Prostate gland (tissue), 2 donors: ENCODE measurements at regions of chr22 and their contacts with region 1.

Region 1: DNA sequence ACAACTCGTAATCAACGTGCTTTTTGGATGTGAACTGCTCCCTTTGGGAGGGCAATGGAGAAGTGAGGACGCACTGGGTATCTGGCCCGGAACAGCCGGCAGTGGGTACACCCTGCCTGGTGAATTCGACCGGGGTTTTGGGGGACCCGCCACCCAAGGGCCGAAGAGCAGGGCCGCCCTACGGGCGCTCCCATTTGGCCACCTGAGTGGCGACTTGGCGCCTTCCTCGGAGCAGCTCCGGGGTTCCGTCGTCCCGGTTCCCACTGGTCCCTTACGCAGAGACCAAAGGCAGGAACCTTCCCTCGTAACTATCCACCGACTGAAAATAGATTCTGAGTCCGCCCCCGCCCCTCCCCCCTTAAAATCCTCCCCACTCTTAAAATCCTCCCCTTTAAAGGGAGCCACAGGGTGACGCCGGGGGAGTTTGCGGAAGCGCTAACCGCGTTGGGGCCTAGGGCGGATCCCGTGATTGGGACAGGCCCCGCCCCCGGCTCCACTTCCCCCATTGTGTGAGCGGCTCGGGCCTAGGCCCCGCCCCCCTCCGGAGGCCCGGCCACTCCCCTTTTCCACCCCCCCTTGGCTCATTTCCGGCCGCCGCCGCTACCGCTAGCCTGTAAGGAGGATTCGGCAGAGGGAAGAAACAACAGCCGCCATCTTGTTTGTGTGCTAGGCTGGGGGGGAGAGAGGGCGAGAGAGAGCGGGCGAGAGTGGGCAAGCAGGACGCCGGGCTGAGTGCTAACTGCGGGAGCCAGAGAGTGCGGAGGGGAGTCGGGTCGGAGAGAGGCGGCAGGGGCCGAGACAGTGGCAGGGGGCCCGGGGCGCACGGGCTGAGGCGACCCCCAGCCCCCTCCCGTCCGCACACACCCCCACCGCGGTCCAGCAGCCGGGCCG is 1.0 kb upstream of the EP300 start:
- DNase-seq: peak; percentile 99
- H3K4me3 ChIP-seq: peak overlapping the region; percentile 74 to 99
- H3K27ac ChIP-seq: peak overlapping the region; percentile 100
- H3K4me1 ChIP-seq: peaks cover 5% of the 10 kb centered on the region
- H3K27me3 ChIP-seq: no peaks in the 10 kb centered on the region
- CTCF ChIP-seq: peak in 1 of 4 experiments; percentile 4
- POLR2A ChIP-seq: peak; percentile 93

Region 2: GRCh38 chr22:40950962-40951794 is 140.2 kb before region 1 on chr22 and contains the start of gene RBX1:
- intact Hi-C with region 1: loop called (anchors 1 kb)
- DNase-seq: peak; percentile 98
- H3K4me3 ChIP-seq: peak within 1 kb of the TSS; percentile 73 to 80
- H3K27ac ChIP-seq: peak within 1 kb of the TSS; percentile 91 to 95
- H3K4me1 ChIP-seq: peaks cover 5% of the 10 kb centered on the region
- H3K27me3 ChIP-seq: no peaks in the 10 kb centered on the region
- CTCF ChIP-seq: no peak
- POLR2A ChIP-seq: peak; percentile 91
- total RNA-seq, gene RBX1: 34.9 to 42.8 TPM

Region 3: DNA sequence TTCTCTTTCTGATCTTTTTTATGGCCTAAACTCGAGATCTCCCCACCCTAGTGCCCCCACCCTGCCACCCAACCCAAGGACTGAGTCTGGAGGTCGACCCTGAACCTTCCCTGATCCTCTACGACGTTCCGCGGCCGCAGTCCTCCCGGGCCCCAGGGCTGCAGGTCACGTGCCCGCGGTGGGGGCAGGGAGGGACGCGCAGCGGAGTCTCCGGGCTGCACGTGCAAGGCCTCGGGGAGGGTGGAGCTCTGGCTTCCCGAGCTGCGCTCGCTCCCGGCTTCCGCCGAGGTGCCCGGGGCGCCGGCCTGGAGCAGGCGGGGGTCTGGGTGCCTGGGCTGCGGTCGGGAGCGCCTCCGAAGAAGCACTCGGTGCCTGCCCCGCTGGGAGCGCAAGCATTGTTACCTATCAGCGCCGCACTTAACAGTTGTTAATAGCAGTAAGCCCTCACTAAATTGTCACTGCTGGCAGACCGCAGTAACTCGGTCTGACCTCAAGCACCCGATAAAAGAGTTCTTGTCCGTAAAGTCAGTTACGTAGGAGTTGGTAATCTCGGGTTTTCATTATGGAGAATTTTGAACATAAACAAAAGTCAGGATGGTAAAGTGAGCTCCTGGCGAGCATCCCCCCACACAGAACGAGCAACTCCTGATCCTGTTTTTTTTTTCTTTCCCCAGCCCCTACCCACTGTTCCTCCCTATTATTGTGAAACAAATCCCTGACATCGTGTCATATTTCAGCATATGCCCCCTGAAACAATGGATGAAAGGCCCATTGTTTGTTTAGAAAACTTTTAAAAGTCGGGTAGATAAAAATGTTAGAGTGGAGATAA is 68.7 kb before region 1 on chr22:
- intact Hi-C with region 1: loop called (anchors 5 kb)
- DNase-seq: peak; percentile 92
- H3K4me3 ChIP-seq: peak overlapping the region; percentile 74 to 77
- H3K27ac ChIP-seq: peak overlapping the region; percentile 98 to 99
- H3K4me1 ChIP-seq: no peaks in the 10 kb centered on the region
- H3K27me3 ChIP-seq: no peaks in the 10 kb centered on the region
- CTCF ChIP-seq: no peak
- POLR2A ChIP-seq: peak; percentile 52

Region 4: GRCh38 chr22:41038732-41039445 is 52.5 kb before region 1 on chr22:
- intact Hi-C with region 1: no loop called
- DNase-seq: no peak
- H3K4me3 ChIP-seq: no peak overlapping the region
- H3K27ac ChIP-seq: no peak overlapping the region
- H3K4me1 ChIP-seq: no peaks in the 10 kb centered on the region
- H3K27me3 ChIP-seq: no peaks in the 10 kb centered on the region
- CTCF ChIP-seq: no peak
- POLR2A ChIP-seq: no peak

Region 5: GRCh38 chr22:41197038-41197972 is 105.9 kb after region 1 on chr22:
- intact Hi-C with region 1: loop called (anchors 5 kb)
- DNase-seq: peak; percentile 75
- H3K4me3 ChIP-seq: peak overlapping the region; percentile 64 to 76
- H3K27ac ChIP-seq: peak overlapping the region; percentile 39 to 65
- H3K4me1 ChIP-seq: no peaks in the 10 kb centered on the region
- H3K27me3 ChIP-seq: no peaks in the 10 kb centered on the region
- CTCF ChIP-seq: peak in 1 of 4 experiments; percentile 24
- POLR2A ChIP-seq: peak; percentile 25

Region 6: DNA sequence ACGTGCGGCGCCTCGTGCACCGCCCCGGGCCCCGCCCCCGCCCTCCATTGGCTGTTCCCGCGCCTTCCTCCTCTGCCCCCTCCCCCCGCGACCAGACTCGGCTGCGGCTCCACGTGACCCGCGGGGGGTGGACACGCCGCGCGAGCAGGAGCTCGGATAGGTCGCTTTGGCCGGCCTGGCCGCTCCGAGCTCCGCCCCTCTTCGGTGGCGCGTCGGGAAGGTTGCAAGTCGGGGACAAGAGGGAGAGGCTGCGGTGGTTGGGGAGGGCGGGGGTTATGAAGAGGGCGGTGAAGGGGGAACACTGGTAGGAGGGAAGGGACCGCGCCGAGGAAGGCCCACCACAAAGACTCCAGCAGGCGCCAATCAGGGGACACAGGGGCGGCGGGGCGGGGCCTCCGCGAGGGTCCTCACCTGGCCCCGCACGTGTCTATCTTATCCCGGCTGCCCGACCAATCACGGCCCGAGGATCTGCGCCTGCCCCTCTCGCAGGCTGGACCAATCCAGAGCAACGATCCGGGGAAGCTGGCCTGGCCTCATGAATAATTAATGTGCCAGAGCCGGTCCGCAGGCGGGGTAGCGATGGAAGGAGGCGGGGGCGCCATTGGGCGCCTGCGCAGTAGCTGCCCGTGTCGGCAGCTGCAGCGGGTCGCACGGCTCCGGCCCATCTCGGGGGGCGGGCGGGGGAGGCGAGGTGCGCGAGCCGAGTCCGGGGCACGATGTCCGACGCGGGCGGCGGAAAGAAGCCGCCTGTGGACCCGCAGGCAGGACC is 290.1 kb after region 1 on chr22 and contains the start of gene TEF:
- intact Hi-C with region 1: loop called (anchors 5 kb)
- DNase-seq: peak; percentile 99
- H3K4me3 ChIP-seq: peak within 1 kb of the TSS; percentile 83 to 97
- H3K27ac ChIP-seq: peak within 1 kb of the TSS; percentile 93 to 98
- H3K4me1 ChIP-seq: peaks cover 9% of the 10 kb centered on the region
- H3K27me3 ChIP-seq: no peaks in the 10 kb centered on the region
- CTCF ChIP-seq: no peak
- POLR2A ChIP-seq: peak; percentile 73
- total RNA-seq, gene TEF: 26.2 to 51.7 TPM